ENCODE measurements at regions of chr3 and their contacts with region 1.

Region 1: DNA sequence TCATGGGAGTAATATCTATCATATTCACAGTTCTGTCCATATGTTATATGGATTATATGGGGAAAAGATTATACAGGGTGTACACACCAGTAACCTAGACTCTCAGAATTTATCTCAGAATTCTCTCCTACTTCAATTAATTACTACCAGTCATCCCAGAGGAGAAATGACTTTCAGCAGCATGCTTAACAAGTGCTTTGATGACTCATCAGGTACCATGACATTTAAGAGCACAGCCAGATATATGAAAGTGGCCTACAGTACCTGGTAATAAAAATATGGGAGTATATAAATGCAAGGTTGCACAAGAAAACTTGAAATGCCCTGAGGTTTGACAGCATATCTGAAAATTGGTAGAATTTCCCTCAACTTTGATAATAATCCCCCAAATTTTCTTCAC is 1273.0 kb downstream of the OTOL1 start:
- DNase-seq: no peak
- ATAC-seq: no peak
- H3K4me3 ChIP-seq: no peak overlapping the region
- H3K27ac ChIP-seq: no peak overlapping the region
- H3K4me1 ChIP-seq: no peaks in the 10 kb centered on the region
- H3K27me3 ChIP-seq: no peaks in the 10 kb centered on the region
- CTCF ChIP-seq: no peak
- POLR2A ChIP-seq: no peak

Region 2: GRCh38 chr3:162586591-162586990 is 183.0 kb before region 1 on chr3:
- intact Hi-C with region 1: loop called in 1 of 10 experiments (anchors 5 kb)
- DNase-seq: no peak
- ATAC-seq: no peak
- H3K4me3 ChIP-seq: no peak overlapping the region
- H3K27ac ChIP-seq: no peak overlapping the region
- H3K4me1 ChIP-seq: no peaks in the 10 kb centered on the region
- H3K27me3 ChIP-seq: no peaks in the 10 kb centered on the region
- CTCF ChIP-seq: no peak
- POLR2A ChIP-seq: no peak